Uterus (tissue), 4 donors: ENCODE measurements at regions of chr7 and their contacts with region 1.

Region 1: GRCh38 chr7:71735961-71736556 is 604.1 kb downstream of the GALNT17 start:
- DNase-seq: peak; percentile 46 to 54
- H3K4me3 ChIP-seq: no peak overlapping the region
- H3K27ac ChIP-seq: no peak overlapping the region
- H3K4me1 ChIP-seq: no peaks in the 10 kb centered on the region
- H3K27me3 ChIP-seq: no peaks in the 10 kb centered on the region
- CTCF ChIP-seq: peak; percentile 68 to 81 (median 74)
- POLR2A ChIP-seq: no peak

Region 2: DNA sequence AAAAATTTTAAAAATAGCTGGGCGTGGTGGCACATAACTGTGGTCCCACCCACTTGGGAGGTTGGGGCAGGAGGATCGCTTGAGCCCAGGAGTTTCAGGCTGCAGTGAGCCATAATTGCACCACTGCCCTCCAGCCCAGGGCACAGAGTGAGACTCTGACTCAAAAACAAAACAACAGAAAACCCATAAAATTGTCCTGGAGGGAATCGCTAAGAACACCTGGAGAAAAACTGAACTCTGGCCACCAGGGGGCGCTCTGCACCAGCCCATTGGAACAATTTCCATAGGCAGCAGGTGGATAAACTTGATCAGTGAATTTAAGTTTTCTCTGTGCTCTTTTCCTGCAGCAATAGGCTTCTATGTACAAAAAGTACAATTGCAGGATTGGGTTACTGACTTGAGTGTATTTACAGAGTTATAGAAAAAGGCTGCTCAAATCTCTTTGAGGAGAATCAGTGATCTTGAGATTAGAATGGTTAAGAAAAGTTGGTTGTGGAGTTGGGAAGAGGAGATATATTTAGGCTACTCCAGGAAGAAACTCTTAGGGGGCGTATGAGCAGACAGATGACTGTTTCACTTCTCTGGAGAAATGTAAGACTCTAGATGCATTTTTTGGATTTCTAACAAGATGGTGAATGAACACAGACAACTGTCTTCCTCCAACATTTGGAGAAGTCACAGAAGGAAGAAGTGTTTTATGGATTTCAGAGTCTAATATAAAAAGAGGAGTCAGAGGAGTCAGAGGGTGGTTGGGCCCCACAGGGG is 879.0 kb before region 1 on chr7:
- intact Hi-C with region 1: loop called (anchors 5 kb)
- DNase-seq: peak; percentile 57 to 59
- H3K4me3 ChIP-seq: no peak overlapping the region
- H3K27ac ChIP-seq: no peak overlapping the region
- H3K4me1 ChIP-seq: no peaks in the 10 kb centered on the region
- H3K27me3 ChIP-seq: no peaks in the 10 kb centered on the region
- CTCF ChIP-seq: peak; percentile 63 to 92 (median 76)
- POLR2A ChIP-seq: no peak

Region 3: GRCh38 chr7:71787513-71787912 is 51.5 kb after region 1 on chr7:
- intact Hi-C with region 1: no loop called
- DNase-seq: no peak
- H3K4me3 ChIP-seq: no peak overlapping the region
- H3K27ac ChIP-seq: no peak overlapping the region
- H3K4me1 ChIP-seq: no peaks in the 10 kb centered on the region
- H3K27me3 ChIP-seq: no peaks in the 10 kb centered on the region
- CTCF ChIP-seq: no peak
- POLR2A ChIP-seq: no peak

Region 4: GRCh38 chr7:72058579-72058978 is 322.5 kb after region 1 on chr7:
- intact Hi-C with region 1: no loop called
- DNase-seq: no peak
- H3K4me3 ChIP-seq: no peak overlapping the region
- H3K27ac ChIP-seq: no peak overlapping the region
- H3K4me1 ChIP-seq: no peaks in the 10 kb centered on the region
- H3K27me3 ChIP-seq: no peaks in the 10 kb centered on the region
- CTCF ChIP-seq: no peak
- POLR2A ChIP-seq: no peak